Natural killer cell (primary cell): ENCODE measurements at regions of chr10 and their contacts with region 1.

Region 1: GRCh38 chr10:70221030-70221429 is 12.2 kb downstream of the PPA1 start:
- DNase-seq: no peak
- ATAC-seq: no peak
- H3K4me3 ChIP-seq: no peak overlapping the region
- H3K4me3 Mint-ChIP-seq: peak overlapping the region; percentile 60
- H3K27ac ChIP-seq: no peak overlapping the region
- H3K27ac Mint-ChIP-seq: peak overlapping the region; percentile 54 to 67
- H3K4me1 ChIP-seq: no peaks in the 10 kb centered on the region
- H3K4me1 Mint-ChIP-seq: peaks cover 9 to 12% of the 10 kb centered on the region in 2 donors
- H3K27me3 ChIP-seq: no peaks in the 10 kb centered on the region
- H3K27me3 Mint-ChIP-seq: no peaks in the 10 kb centered on the region
- CTCF ChIP-seq: no peak

Region 2: GRCh38 chr10:70272925-70273316 is 51.9 kb after region 1 on chr10:
- intact Hi-C with region 1: loop called (anchors 5 kb)
- DNase-seq: peak in 1 of 2 donors; percentile 66
- ATAC-seq: peak; percentile 76 to 83 (median 82)
- H3K4me3 ChIP-seq: no peak overlapping the region
- H3K4me3 Mint-ChIP-seq: no peak overlapping the region
- H3K27ac ChIP-seq: no peak overlapping the region
- H3K27ac Mint-ChIP-seq: no peak overlapping the region
- H3K4me1 ChIP-seq: peaks cover 5% of the 10 kb centered on the region
- H3K4me1 Mint-ChIP-seq: no peaks in the 10 kb centered on the region
- H3K27me3 ChIP-seq: no peaks in the 10 kb centered on the region
- H3K27me3 Mint-ChIP-seq: peaks cover 0 to 3% of the 10 kb centered on the region in 2 donors
- CTCF ChIP-seq: peak; percentile 61